AG04450 (cell line): ENCODE measurements at regions of chr2 and their contacts with region 1.

Region 1: DNA sequence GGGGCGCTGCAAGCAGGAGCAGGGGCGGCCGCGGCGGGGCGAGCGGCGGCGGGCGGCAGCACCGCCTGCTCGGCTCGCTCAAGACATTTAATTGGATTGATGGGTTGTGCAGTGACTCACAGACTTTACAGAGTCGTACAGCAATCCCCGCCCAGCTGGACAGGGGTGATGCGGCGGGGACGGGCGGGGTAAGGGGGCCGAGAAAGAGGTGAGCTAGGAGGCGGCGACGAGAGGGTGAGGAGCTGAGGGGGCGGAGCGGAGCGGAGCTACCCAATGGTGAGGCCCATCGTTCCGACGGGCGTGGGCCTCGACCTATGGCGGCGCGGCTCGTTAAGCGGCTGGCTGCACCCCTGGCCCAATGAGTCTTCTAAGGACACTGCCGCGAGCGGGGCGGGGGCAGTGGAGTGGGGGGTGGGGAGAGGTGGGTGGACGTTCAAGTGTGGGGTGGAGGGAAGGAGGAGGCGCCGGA is 97.1 kb upstream of the SERTAD2 start:
- DNase-seq: peak; percentile 100
- H3K4me3 ChIP-seq: peak overlapping the region; percentile 85
- H3K27ac ChIP-seq: peak overlapping the region; percentile 60
- H3K27me3 ChIP-seq: no peaks in the 10 kb centered on the region
- CTCF ChIP-seq: no peak

Region 2: DNA sequence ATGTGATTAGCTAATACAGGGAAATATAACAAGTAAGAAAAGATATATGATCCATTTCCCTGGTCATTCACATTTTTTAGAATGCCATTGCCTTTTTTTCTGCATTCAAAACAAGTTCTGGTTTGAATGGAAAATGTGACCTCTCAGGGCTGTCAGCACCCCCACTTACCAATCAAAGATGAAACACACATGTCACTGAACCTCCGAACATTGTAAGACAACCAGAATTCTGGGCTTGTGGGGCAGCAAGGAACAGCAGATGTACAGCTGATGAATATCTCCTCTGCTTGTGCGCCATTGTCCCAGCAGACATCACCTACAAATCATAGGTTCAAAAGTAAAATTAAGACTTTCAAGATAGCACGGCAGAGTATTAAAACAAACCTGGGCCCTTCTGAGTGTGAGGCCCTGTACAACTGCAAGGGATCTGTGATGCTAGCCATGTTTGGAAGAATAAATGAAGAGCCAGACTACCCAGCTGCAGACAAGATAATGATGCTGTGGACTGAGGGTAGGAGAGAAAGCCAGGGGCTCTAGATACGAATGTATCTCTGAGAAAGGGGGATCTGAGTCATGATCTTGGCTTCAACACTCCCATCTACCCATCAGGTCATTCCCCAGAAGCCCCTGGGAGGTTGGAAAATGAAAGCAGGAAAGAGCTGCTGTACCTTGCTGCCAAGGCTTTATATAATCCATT is 11.6 kb after region 1 on chr2:
- CTCF ChIA-PET with region 1: interaction called, 10 read pairs
- POLR2A ChIA-PET with region 1: interaction called, 18 read pairs
- DNase-seq: no peak
- H3K4me3 ChIP-seq: no peak overlapping the region
- H3K27ac ChIP-seq: no peak overlapping the region
- H3K27me3 ChIP-seq: no peaks in the 10 kb centered on the region
- CTCF ChIP-seq: no peak

Region 3: GRCh38 chr2:64767670-64768468 is 17.0 kb after region 1 on chr2:
- CTCF ChIA-PET with region 1: interaction called, 8 read pairs
- POLR2A ChIA-PET with region 1: interaction called, 18 read pairs
- DNase-seq: peak; percentile 61
- H3K4me3 ChIP-seq: peak overlapping the region; percentile 58
- H3K27ac ChIP-seq: peak overlapping the region; percentile 88
- H3K27me3 ChIP-seq: no peaks in the 10 kb centered on the region
- CTCF ChIP-seq: no peak

Region 4: GRCh38 chr2:64859312-64860212 is 108.7 kb after region 1 on chr2:
- CTCF ChIA-PET with region 1: interaction called, 10 read pairs
- POLR2A ChIA-PET with region 1: interaction called, 23 read pairs
- DNase-seq: peak; percentile 78
- H3K4me3 ChIP-seq: peak overlapping the region; percentile 44
- H3K27ac ChIP-seq: peak overlapping the region; percentile 92
- H3K27me3 ChIP-seq: peaks cover 5% of the 10 kb centered on the region
- CTCF ChIP-seq: no peak

Region 5: GRCh38 chr2:64865073-64865830 is 114.4 kb after region 1 on chr2:
- CTCF ChIA-PET with region 1: interaction called, 10 read pairs
- POLR2A ChIA-PET with region 1: interaction called, 23 read pairs
- DNase-seq: no peak
- H3K4me3 ChIP-seq: peak overlapping the region; percentile 57
- H3K27ac ChIP-seq: no peak overlapping the region
- H3K27me3 ChIP-seq: peaks cover 38% of the 10 kb centered on the region
- CTCF ChIP-seq: peak; percentile 53

Region 6: GRCh38 chr2:65040400-65041261 is 289.8 kb after region 1 on chr2:
- CTCF ChIA-PET with region 1: no interaction called
- POLR2A ChIA-PET with region 1: no interaction called
- DNase-seq: peak; percentile 62
- H3K4me3 ChIP-seq: peak overlapping the region; percentile 27; the same call in 1 of the 2 replicates
- H3K27ac ChIP-seq: no peak overlapping the region
- H3K27me3 ChIP-seq: peaks cover 5% of the 10 kb centered on the region
- CTCF ChIP-seq: peak; percentile 95

Region 7: DNA sequence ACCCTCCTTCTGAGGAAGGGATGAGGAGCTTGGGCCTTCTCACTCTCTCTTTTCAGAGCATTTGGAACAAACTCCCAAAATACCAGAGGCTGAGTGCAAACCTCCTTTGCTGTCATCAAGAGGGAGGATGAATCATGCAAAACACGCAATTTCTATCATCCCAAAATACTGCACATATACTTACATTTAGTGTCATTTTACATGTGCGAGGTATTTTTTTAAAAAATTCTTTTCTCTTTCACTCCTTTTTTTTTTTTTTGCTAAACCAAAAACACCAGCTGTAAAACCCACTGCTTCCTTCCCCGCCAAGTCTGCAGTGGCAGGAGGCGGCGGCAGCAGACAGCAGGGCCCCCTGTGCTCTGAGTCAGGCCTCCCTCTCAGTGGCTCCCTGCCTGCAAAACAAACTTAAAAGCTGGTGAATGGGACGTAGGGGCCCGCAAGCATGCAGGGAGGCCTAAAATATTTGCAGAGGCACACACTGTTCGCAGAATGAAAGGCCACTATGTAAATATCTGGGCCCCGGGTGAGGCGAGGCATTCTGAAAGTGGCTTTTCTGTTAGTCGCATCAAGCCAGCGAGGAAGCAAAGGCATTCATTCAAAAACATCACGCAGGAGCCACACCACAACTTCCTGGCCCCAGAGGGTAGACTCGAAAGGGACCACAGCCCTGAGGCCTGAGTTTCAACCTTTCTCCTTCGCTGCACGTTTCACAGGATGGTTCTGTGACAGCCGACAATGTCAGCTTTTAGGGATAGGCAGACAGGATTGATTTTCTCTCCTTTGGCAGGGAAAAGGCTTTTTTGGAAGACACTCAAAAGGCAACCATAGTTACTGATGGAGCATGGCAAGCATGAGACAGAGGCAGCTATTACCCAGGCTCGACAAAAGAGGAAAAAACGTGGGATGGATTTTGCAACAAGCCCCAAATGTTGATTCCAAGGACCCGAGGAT is 550.2 kb after region 1 on chr2:
- CTCF ChIA-PET with region 1: no interaction called
- POLR2A ChIA-PET with region 1: no interaction called
- DNase-seq: peak; percentile 72
- H3K4me3 ChIP-seq: peak overlapping the region; percentile 31
- H3K27ac ChIP-seq: peak overlapping the region; percentile 87
- H3K27me3 ChIP-seq: no peaks in the 10 kb centered on the region
- CTCF ChIP-seq: no peak